ENCODE measurements at regions of chr1 and their contacts with region 1.

Region 1: GRCh38 chr1:15918962-15919715 is 56.8 kb downstream of the ZBTB17 start:
- DNase-seq: peak in 1 of 4 experiments; percentile 16
- ATAC-seq: no peak
- H3K4me3 ChIP-seq: no peak overlapping the region
- H3K27ac ChIP-seq: no peak overlapping the region
- H3K4me1 ChIP-seq: no peaks in the 10 kb centered on the region
- H3K27me3 ChIP-seq: no peaks in the 10 kb centered on the region
- CTCF ChIP-seq: no peak
- EP300 ChIP-seq: no peak
- POLR2A ChIP-seq: no peak
- RAD21 ChIP-seq: no peak

Region 2: DNA sequence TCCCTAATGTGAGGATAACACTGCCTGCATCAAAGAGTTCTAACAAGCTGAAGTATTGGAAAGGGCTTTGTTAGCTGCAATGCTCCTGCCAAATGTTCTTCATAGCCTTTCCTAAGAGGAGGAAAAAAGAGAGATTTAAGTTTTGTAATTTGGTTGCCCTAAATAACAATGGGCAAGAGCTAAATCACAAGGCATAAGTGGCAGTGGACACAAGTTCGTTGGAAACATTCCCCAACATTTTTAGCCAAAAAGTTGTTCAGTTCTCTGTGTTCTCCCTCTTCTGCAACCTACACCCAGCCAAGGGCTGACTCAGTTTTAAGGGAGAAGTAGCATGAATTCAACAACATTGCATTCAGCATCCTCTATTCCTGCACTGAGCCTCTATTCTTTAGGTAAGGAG is 109.1 kb before region 1 on chr1:
- CTCF ChIA-PET with region 1: no interaction called
- POLR2A ChIA-PET with region 1: no interaction called
- in situ Hi-C with region 1: loop called (anchors 5 kb)
- intact Hi-C with region 1: no loop called
- DNase-seq: no peak
- ATAC-seq: no peak
- H3K4me3 ChIP-seq: no peak overlapping the region
- H3K27ac ChIP-seq: no peak overlapping the region
- H3K4me1 ChIP-seq: no peaks in the 10 kb centered on the region
- H3K27me3 ChIP-seq: no peaks in the 10 kb centered on the region; a peak in 1 of 5 replicates
- CTCF ChIP-seq: no peak
- EP300 ChIP-seq: no peak
- POLR2A ChIP-seq: no peak
- RAD21 ChIP-seq: no peak

Region 3: GRCh38 chr1:15937706-15938168 is 18.6 kb after region 1 on chr1:
- CTCF ChIA-PET with region 1: no interaction called
- POLR2A ChIA-PET with region 1: interaction called, 15 read pairs
- in situ Hi-C with region 1: no loop called
- intact Hi-C with region 1: no loop called
- DNase-seq: peak in 1 of 4 experiments; percentile 18
- ATAC-seq: peak; percentile 11
- H3K4me3 ChIP-seq: no peak overlapping the region
- H3K27ac ChIP-seq: peak overlapping the region; percentile 37; the same call in 1 of the 3 replicates
- H3K4me1 ChIP-seq: peaks cover 0 to 21% of the 10 kb centered on the region in 2 experiments; a peak in 1 of 5 replicates
- H3K27me3 ChIP-seq: no peaks in the 10 kb centered on the region
- CTCF ChIP-seq: peak in 1 of 3 experiments; percentile 25; a peak in 1 of 6 replicates
- EP300 ChIP-seq: no peak
- POLR2A ChIP-seq: peak; percentile 38; the same call in 1 of the 2 replicates
- RAD21 ChIP-seq: peak in 1 of 2 experiments; percentile 25; a peak in 1 of 4 replicates